CD4-positive, alpha-beta T cell (primary cell): ENCODE measurements at regions of chr13 and their contacts with region 1.

Region 1: GRCh38 chr13:52450012-52450792 is at the start of gene VPS36:
- DNase-seq: peak; percentile 88 to 99 (median 94)
- ATAC-seq: peak; percentile 58
- H3K4me3 ChIP-seq: peak within 1 kb of the TSS; percentile 74
- H3K4me3 Mint-ChIP-seq: peak within 1 kb of the TSS; percentile 94
- H3K27ac ChIP-seq: peak within 1 kb of the TSS; percentile 4 to 43
- H3K27ac Mint-ChIP-seq: peak within 1 kb of the TSS; percentile 79
- H3K4me1 ChIP-seq: peaks cover 25% of the 10 kb centered on the region
- H3K4me1 Mint-ChIP-seq: peaks cover 55% of the 10 kb centered on the region
- H3K27me3 ChIP-seq: no peaks in the 10 kb centered on the region
- H3K27me3 Mint-ChIP-seq: no peaks in the 10 kb centered on the region
- CTCF ChIP-seq: peak; percentile 98
- total RNA-seq, gene VPS36: 29.9 to 31.0 TPM

Region 2: GRCh38 chr13:51803422-51804294 is 646.5 kb before region 1 on chr13 and contains the start of gene DHRS12:
- CTCF ChIA-PET with region 1: no interaction called
- POLR2A ChIA-PET with region 1: no interaction called
- intact Hi-C with region 1: loop called in 1 of 2 experiments (anchors 1 kb)
- DNase-seq: peak; percentile 75 to 97 (median 82)
- ATAC-seq: peak; percentile 73
- H3K4me3 ChIP-seq: peak within 1 kb of the TSS; percentile 81
- H3K4me3 Mint-ChIP-seq: peak within 1 kb of the TSS; percentile 97
- H3K27ac ChIP-seq: peak within 1 kb of the TSS; percentile 99
- H3K27ac Mint-ChIP-seq: peak within 1 kb of the TSS; percentile 99
- H3K4me1 ChIP-seq: peaks cover 58% of the 10 kb centered on the region
- H3K4me1 Mint-ChIP-seq: peaks cover 61% of the 10 kb centered on the region
- H3K27me3 ChIP-seq: no peaks in the 10 kb centered on the region
- H3K27me3 Mint-ChIP-seq: no peaks in the 10 kb centered on the region
- CTCF ChIP-seq: no peak
- total RNA-seq, gene DHRS12: 10.0 to 14.8 TPM

Region 3: DNA sequence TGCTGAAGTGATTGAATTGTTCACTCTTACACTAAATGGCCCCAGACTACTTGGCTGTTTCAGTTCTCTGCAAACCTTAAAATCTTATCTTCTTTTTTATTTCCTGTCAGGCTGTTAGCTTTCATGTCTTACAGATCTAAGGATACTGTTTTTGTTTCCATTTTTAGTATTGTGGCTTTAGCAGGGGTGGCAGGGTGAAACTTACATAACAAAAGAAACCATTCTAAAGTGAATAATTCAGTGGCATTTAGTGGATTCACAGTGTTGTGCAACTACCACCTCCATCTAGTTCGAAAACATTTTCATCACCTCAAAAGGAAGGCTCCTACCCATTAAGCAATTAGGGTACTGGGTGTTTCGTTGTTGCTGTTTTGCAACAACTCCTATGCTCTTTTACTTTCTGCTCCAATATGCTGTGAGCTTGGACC is 625.0 kb before region 1 on chr13:
- CTCF ChIA-PET with region 1: no interaction called
- POLR2A ChIA-PET with region 1: interaction called, 3 read pairs
- intact Hi-C with region 1: loop called in 1 of 2 experiments (anchors 5 kb)
- DNase-seq: peak in 4 of 14 experiments; percentile 39 to 85 (median 76)
- ATAC-seq: peak; percentile 58
- H3K4me3 ChIP-seq: peak overlapping the region; percentile 54
- H3K4me3 Mint-ChIP-seq: peak overlapping the region; percentile 86
- H3K27ac ChIP-seq: peak overlapping the region; percentile 76 to 79
- H3K27ac Mint-ChIP-seq: peak overlapping the region; percentile 89
- H3K4me1 ChIP-seq: peaks cover 78% of the 10 kb centered on the region
- H3K4me1 Mint-ChIP-seq: peaks cover 88% of the 10 kb centered on the region
- H3K27me3 ChIP-seq: no peaks in the 10 kb centered on the region
- H3K27me3 Mint-ChIP-seq: no peaks in the 10 kb centered on the region
- CTCF ChIP-seq: no peak

Region 4: DNA sequence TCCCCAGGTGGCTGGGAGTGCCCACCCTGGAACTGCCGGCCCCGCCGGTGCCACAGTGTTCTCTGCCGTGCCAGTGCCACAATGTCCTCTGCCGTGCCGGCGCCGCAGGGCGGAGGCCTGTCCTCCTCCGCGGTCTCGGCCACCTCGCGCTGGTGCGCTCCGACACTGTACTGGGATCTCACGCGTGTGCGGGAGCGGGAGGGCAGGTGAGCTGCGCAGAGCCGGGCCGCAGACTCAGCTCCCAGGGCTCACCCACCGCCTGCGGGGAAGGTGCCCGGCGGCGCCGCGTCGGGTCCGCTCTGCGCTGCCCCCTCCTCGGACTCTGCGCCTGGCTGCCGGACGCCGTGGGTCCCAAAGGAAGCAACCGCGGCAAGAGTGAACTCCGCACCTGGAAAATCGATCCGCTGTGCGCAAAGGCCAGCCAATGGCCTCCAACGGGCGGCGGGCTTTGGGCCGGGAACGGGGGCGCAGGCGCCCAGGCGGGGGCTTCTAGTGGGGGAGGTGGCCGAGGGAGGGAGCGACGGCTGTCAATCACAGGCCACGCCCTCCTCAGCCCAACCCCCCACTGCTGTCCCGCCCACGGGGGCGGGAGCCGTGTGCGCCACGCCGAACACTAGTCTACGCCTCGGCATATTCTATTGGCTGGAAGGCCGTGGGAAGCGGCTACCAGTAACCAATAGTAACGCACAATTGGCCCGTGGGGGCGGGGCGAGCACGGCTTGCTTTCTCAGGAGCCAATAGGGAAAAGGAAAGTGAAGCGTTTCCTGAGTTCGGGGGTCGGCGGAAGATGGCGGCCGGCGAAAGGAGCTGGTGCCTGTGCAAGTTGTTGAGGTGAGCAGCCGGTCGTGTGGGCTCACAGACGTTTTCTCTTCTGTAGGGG is 438.3 kb before region 1 on chr13 and contains the start of gene ALG11:
- CTCF ChIA-PET with region 1: no interaction called
- POLR2A ChIA-PET with region 1: no interaction called
- intact Hi-C with region 1: loop called (anchors 5 kb)
- DNase-seq: peak; percentile 99 to 100 (median 99)
- ATAC-seq: peak; percentile 98
- H3K4me3 ChIP-seq: peak within 1 kb of the TSS; percentile 93
- H3K4me3 Mint-ChIP-seq: peak within 1 kb of the TSS; percentile 92
- H3K27ac ChIP-seq: peak within 1 kb of the TSS in 1 of 2 donors; percentile 56
- H3K27ac Mint-ChIP-seq: peak within 1 kb of the TSS; percentile 84
- H3K4me1 ChIP-seq: peaks cover 9% of the 10 kb centered on the region
- H3K4me1 Mint-ChIP-seq: peaks cover 24% of the 10 kb centered on the region
- H3K27me3 ChIP-seq: peaks cover 2 to 24% of the 10 kb centered on the region in 2 experiments
- H3K27me3 Mint-ChIP-seq: peaks cover 12% of the 10 kb centered on the region
- CTCF ChIP-seq: no peak
- total RNA-seq, gene ALG11: 25.8 to 29.8 TPM

Region 5: GRCh38 chr13:52194184-52194868 is 255.9 kb before region 1 on chr13:
- CTCF ChIA-PET with region 1: interaction called, 6 read pairs
- POLR2A ChIA-PET with region 1: interaction called, 10 read pairs
- intact Hi-C with region 1: loop called (anchors 1 to 5 kb)
- DNase-seq: peak; percentile 77 to 91 (median 86)
- ATAC-seq: peak; percentile 80
- H3K4me3 ChIP-seq: peak overlapping the region; percentile 85
- H3K4me3 Mint-ChIP-seq: peak overlapping the region; percentile 97
- H3K27ac ChIP-seq: peak overlapping the region; percentile 48 to 59
- H3K27ac Mint-ChIP-seq: peak overlapping the region; percentile 95
- H3K4me1 ChIP-seq: peaks cover 23% of the 10 kb centered on the region
- H3K4me1 Mint-ChIP-seq: peaks cover 33% of the 10 kb centered on the region
- H3K27me3 ChIP-seq: no peaks in the 10 kb centered on the region
- H3K27me3 Mint-ChIP-seq: no peaks in the 10 kb centered on the region
- CTCF ChIP-seq: no peak

Region 6: DNA sequence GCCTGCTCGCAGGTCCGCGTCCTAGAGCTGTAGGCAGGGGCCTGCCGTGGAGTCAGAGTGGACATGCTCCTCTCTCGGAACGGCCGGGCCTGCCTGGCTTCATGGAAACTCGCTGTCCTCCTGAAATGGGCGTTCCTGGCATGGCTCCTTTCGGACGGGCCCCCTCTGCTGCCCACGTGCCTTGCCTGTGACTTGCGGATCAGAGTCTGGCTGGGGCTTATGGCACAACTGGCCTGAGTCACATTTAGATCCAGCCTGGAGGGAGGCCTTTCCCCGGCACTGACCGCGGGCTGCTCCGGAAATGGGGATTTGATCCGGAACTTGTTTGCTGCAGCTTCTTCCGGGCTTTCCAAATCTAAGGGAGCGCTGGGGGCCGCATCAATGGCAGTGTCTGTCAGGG is 72.3 kb before region 1 on chr13:
- CTCF ChIA-PET with region 1: no interaction called
- POLR2A ChIA-PET with region 1: no interaction called
- intact Hi-C with region 1: no loop called
- DNase-seq: no peak
- ATAC-seq: no peak
- H3K4me3 ChIP-seq: no peak overlapping the region
- H3K4me3 Mint-ChIP-seq: no peak overlapping the region
- H3K27ac ChIP-seq: no peak overlapping the region
- H3K27ac Mint-ChIP-seq: no peak overlapping the region
- H3K4me1 ChIP-seq: no peaks in the 10 kb centered on the region
- H3K4me1 Mint-ChIP-seq: no peaks in the 10 kb centered on the region
- H3K27me3 ChIP-seq: no peaks in the 10 kb centered on the region
- H3K27me3 Mint-ChIP-seq: no peaks in the 10 kb centered on the region
- CTCF ChIP-seq: no peak

Region 7: DNA sequence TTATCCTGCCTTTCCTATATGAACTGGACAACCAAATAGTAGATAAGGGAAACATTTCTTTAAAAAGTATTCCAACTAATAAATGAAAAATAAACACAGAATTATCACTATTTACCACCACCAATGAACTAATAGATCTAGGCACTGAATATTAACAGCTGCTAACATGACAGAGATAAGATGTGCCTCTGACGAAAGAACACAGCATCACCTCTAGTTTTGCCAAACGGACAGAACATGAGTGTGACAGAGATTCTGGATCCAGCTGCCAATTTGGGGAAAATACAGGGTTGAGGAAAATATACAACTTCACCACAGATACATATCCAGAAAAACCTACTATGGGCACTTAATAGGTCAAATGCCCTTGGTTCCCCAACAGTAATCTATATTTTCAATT is 17.7 kb before region 1 on chr13:
- CTCF ChIA-PET with region 1: interaction called, 24 read pairs
- POLR2A ChIA-PET with region 1: interaction called, 3 read pairs
- intact Hi-C with region 1: no loop called
- DNase-seq: no peak
- ATAC-seq: no peak
- H3K4me3 ChIP-seq: no peak overlapping the region
- H3K4me3 Mint-ChIP-seq: no peak overlapping the region
- H3K27ac ChIP-seq: no peak overlapping the region
- H3K27ac Mint-ChIP-seq: no peak overlapping the region
- H3K4me1 ChIP-seq: no peaks in the 10 kb centered on the region
- H3K4me1 Mint-ChIP-seq: no peaks in the 10 kb centered on the region
- H3K27me3 ChIP-seq: no peaks in the 10 kb centered on the region
- H3K27me3 Mint-ChIP-seq: no peaks in the 10 kb centered on the region
- CTCF ChIP-seq: no peak

Region 8: GRCh38 chr13:52652196-52652979 is 202.2 kb after region 1 on chr13 and contains the start of gene SUGT1:
- CTCF ChIA-PET with region 1: interaction called, 13 read pairs
- POLR2A ChIA-PET with region 1: interaction called, 19 read pairs
- intact Hi-C with region 1: loop called (anchors 2 to 5 kb)
- DNase-seq: peak; percentile 88 to 98 (median 94)
- ATAC-seq: peak; percentile 91
- H3K4me3 ChIP-seq: peak within 1 kb of the TSS; percentile 85
- H3K4me3 Mint-ChIP-seq: no peak within 1 kb of the TSS
- H3K27ac ChIP-seq: peak within 1 kb of the TSS; percentile 93 to 97
- H3K27ac Mint-ChIP-seq: no peak within 1 kb of the TSS
- H3K4me1 ChIP-seq: peaks cover 26% of the 10 kb centered on the region
- H3K4me1 Mint-ChIP-seq: peaks cover 12% of the 10 kb centered on the region
- H3K27me3 ChIP-seq: no peaks in the 10 kb centered on the region
- H3K27me3 Mint-ChIP-seq: no peaks in the 10 kb centered on the region
- CTCF ChIP-seq: peak; percentile 58
- total RNA-seq, gene SUGT1: 18.5 to 20.1 TPM

Region 9: DNA sequence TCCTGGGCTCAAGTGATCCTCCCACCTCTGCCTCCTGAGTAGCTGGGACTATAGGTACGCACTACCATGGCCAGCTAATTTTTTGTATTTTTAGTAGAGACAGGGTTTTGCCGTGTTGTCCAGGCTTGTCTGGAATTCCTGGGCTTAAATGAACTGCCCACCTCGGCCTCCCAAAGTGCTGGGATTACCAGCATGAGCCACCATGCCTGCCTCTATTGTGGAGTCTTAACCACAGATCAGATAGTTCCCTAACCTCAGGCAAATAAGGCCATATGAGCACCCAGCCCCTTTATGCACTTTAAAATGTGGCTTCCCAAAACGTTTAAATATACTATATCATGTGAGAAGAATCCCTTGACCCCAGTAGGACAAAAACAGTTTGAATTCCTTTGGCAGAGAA is 273.0 kb after region 1 on chr13:
- CTCF ChIA-PET with region 1: no interaction called
- POLR2A ChIA-PET with region 1: no interaction called
- intact Hi-C with region 1: no loop called
- DNase-seq: no peak
- ATAC-seq: no peak
- H3K4me3 ChIP-seq: no peak overlapping the region
- H3K4me3 Mint-ChIP-seq: no peak overlapping the region
- H3K27ac ChIP-seq: no peak overlapping the region
- H3K27ac Mint-ChIP-seq: no peak overlapping the region
- H3K4me1 ChIP-seq: no peaks in the 10 kb centered on the region
- H3K4me1 Mint-ChIP-seq: no peaks in the 10 kb centered on the region
- H3K27me3 ChIP-seq: peaks cover 0 to 2% of the 10 kb centered on the region in 2 experiments
- H3K27me3 Mint-ChIP-seq: peaks cover 24% of the 10 kb centered on the region
- CTCF ChIP-seq: no peak

Region 10: DNA sequence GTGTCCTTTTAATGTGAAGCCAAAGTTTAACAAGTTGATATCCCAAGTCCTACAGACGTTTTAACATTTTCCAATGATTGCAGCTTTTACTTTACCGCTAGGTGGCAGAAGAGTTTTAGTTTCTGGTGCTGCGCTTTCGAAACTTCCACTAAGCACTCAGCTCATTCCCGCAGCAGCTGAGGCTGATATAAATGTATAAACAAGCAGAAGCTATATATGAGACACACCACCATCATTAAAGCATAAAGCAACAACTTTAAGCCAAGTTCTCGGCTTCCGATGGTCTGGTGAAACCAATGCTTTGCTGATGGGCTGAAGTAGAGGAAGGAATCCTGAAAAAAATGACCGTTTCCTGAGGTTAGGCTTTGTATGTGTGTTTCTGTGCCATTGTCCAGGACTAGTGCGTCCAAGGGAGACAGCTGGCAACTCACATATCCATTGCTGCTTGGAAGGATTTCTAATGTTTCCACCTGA is 1332.3 kb after region 1 on chr13:
- CTCF ChIA-PET with region 1: no interaction called
- POLR2A ChIA-PET with region 1: no interaction called
- intact Hi-C with region 1: no loop called
- DNase-seq: peak in 3 of 14 experiments; percentile 7 to 10 (median 8)
- ATAC-seq: no peak
- H3K4me3 ChIP-seq: no peak overlapping the region
- H3K4me3 Mint-ChIP-seq: no peak overlapping the region
- H3K27ac ChIP-seq: no peak overlapping the region
- H3K27ac Mint-ChIP-seq: no peak overlapping the region
- H3K4me1 ChIP-seq: peaks cover 4% of the 10 kb centered on the region
- H3K4me1 Mint-ChIP-seq: peaks cover 6% of the 10 kb centered on the region
- H3K27me3 ChIP-seq: no peaks in the 10 kb centered on the region
- H3K27me3 Mint-ChIP-seq: no peaks in the 10 kb centered on the region
- CTCF ChIP-seq: peak; percentile 60